Activated CD4-positive, alpha-beta T cell treated with anti-CD3 and anti-CD28 coated beads, Interleukin-2, amount 10 ng/mL, durations not matched to agents 24 days and 14 days (primary cell): ENCODE measurements at regions of chr11 and their contacts with region 1.

Region 1: DNA sequence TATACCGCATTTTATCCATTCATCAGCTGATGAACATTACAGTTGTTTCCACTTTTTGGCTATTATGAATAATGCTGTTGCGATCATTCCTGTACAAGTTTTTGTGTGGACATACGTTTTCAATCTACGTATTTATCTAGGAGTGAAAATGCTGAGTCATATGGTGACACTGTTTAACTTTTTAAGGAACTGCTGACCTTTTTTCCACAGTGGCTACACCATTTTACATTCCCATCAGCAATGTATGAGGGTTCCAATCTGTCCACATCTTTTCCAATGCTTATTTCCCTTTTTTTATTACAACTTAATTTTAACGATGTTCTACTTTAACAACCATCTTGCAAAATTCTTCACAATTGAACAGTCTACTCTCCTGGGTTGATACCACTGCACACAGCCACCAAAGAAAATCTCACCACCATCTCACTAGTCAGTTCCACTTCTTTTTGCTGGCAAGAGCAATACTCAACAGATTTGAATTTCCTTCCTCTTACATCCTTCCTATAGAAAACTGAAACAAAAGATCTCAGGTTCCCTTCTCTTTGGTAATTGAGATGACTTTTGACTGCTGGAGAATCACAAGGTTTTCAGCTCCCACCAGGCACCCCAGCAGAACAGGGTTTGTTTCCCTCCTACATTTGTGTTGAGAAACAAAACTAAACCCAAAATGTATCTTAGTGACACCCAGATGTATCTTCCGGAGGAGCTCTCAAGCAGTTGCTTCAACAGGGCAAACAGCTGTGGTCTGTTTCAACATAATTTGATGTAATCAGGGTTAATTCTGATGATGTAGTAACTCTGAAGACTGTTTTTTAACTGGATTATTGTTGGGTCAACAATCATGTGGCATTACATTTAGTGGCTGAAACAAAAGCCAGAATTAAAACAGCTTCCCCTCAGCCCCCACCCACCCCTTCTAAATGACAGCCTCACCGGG is 7.0 kb upstream of the GAB2 start:
- DNase-seq: peak; percentile 69
- H3K4me3 Mint-ChIP-seq: peak overlapping the region; percentile 50
- H3K27ac Mint-ChIP-seq: peak overlapping the region; percentile 31
- H3K4me1 Mint-ChIP-seq: peaks cover 57% of the 10 kb centered on the region
- H3K27me3 Mint-ChIP-seq: no peaks in the 10 kb centered on the region

Region 2: DNA sequence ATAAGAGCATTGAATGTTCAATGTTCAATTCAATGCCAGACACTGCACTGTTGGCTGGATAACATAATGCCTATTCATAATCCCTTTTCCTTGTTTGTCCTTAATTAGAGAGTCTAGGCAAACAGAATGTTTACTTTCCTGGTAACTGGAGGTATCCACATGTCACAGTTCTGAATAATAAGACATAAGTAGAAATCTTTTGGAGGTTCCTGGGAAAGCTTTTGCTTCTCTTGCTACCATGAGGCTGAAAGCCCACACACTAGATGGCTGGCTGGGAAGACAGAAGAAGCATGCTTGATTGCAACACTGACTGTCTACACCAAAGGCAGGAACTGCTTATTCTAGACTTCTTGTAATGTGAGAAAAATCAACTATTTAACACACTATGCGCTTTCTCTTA is 86.5 kb before region 1 on chr11:
- intact Hi-C with region 1: loop called (anchors 5 kb)
- DNase-seq: no peak
- H3K4me3 Mint-ChIP-seq: peak overlapping the region; percentile 12
- H3K27ac Mint-ChIP-seq: peak overlapping the region; percentile 94
- H3K4me1 Mint-ChIP-seq: peaks cover 73% of the 10 kb centered on the region
- H3K27me3 Mint-ChIP-seq: no peaks in the 10 kb centered on the region

Region 3: GRCh38 chr11:78406538-78407196 is 17.9 kb before region 1 on chr11:
- intact Hi-C with region 1: no loop called
- DNase-seq: no peak
- H3K4me3 Mint-ChIP-seq: no peak overlapping the region
- H3K27ac Mint-ChIP-seq: no peak overlapping the region
- H3K4me1 Mint-ChIP-seq: peaks cover 18% of the 10 kb centered on the region
- H3K27me3 Mint-ChIP-seq: no peaks in the 10 kb centered on the region